CD8-positive, alpha-beta T cell (primary cell): ENCODE measurements at regions of chr12 and their contacts with region 1.

Region 1: DNA sequence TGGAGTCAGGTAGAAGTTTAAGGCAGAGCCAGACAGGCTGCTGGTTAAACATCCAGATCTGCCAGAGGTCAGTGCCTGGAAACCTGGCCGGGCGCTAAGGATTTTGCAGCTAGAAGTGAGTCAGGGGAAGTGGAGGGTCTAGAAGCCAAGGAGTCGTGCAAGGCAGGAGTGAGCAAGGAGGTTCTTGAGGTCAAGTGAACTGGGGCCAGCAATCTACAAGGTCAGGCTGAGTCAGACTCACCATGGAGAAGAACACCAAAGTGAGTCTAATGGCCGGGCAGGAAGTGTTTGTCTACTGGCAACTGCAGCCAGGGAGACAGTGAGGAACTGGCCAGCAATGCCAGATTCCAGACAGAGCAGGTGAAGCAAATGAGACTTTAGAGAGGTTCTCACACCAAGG is 628.2 kb downstream of the ETNK1 start:
- DNase-seq: no peak
- ATAC-seq: no peak
- H3K4me3 ChIP-seq: no peak overlapping the region
- H3K4me3 Mint-ChIP-seq: no peak overlapping the region
- H3K27ac ChIP-seq: no peak overlapping the region
- H3K27ac Mint-ChIP-seq: no peak overlapping the region
- H3K4me1 ChIP-seq: no peaks in the 10 kb centered on the region
- H3K4me1 Mint-ChIP-seq: no peaks in the 10 kb centered on the region
- H3K27me3 ChIP-seq: no peaks in the 10 kb centered on the region
- H3K27me3 Mint-ChIP-seq: no peaks in the 10 kb centered on the region
- CTCF ChIP-seq: no peak

Region 2: DNA sequence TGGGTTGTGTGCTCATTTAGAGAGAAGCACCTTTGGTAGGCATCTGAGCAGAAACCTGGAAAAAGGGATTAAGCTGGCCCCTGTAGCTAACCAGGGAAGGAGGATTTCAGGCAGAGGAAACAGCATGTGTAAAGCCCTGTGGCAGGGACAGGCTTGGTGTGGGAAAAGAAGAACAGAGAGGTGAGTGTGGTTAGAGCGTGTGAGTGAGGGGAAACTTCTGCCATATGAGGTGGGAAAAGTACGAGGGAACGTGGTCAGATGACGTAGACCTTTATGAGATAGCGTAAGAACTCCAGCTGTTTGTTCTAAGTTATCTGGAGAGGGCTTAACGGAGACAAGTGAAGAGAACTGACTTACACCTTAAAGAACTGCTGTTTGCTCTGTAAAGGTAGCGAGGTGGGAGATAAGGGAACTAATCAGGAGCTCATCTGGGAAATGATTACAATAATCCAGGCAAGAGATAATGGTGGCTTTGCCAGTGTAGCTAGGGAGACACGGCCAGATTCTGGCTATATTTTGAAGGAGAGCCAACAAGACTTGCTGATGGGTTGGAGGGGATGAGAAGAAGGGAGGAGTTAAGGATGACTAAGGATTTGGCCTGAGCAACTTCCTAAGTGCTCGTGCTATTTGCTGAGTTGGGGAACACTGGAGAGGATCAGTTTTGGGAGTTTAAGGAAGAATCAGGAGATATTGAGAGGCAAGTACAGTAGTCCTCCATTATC is 394.2 kb before region 1 on chr12:
- CTCF ChIA-PET with region 1: no interaction called
- POLR2A ChIA-PET with region 1: no interaction called
- intact Hi-C with region 1: no loop called
- DNase-seq: no peak
- ATAC-seq: no peak
- H3K4me3 ChIP-seq: no peak overlapping the region
- H3K4me3 Mint-ChIP-seq: no peak overlapping the region
- H3K27ac ChIP-seq: no peak overlapping the region
- H3K27ac Mint-ChIP-seq: no peak overlapping the region
- H3K4me1 ChIP-seq: no peaks in the 10 kb centered on the region
- H3K4me1 Mint-ChIP-seq: peaks cover 2% of the 10 kb centered on the region
- H3K27me3 ChIP-seq: no peaks in the 10 kb centered on the region
- H3K27me3 Mint-ChIP-seq: peaks cover 11% of the 10 kb centered on the region
- CTCF ChIP-seq: no peak

Region 3: DNA sequence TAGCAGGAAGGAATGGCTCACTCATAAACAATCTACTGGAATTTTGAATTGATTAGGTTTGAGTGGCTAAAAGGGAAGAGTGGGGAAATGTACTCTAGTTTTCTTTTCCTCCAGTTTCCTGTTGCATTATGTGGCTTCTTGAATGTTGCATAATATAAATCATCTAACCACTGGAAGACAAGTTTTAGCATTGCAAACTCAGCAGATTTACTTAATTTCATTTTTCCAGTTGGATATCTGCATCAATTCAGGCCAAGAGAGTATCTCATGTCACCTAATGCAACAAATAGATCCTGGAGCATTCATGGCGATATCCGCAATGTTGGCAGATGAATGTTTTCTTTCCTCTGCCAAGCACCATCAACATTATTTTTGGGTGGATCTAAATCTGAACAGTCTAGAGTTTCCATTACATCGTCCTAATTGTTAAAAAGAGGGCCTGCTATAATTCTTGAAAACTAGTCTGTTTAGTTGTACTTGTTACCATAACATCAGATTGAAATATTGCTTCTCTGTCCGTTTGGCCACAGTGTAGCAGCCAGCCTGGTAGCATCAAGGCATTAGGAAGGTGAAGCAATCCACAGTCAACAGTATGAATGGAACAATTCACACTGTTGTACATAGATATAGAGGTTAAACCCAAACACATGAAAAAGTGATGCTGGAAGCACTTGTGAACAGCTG is 84.0 kb before region 1 on chr12:
- CTCF ChIA-PET with region 1: no interaction called
- POLR2A ChIA-PET with region 1: no interaction called
- intact Hi-C with region 1: loop called in 1 of 2 experiments (anchors 5 kb)
- DNase-seq: no peak
- ATAC-seq: no peak
- H3K4me3 ChIP-seq: no peak overlapping the region
- H3K4me3 Mint-ChIP-seq: no peak overlapping the region
- H3K27ac ChIP-seq: no peak overlapping the region
- H3K27ac Mint-ChIP-seq: no peak overlapping the region
- H3K4me1 ChIP-seq: no peaks in the 10 kb centered on the region
- H3K4me1 Mint-ChIP-seq: no peaks in the 10 kb centered on the region
- H3K27me3 ChIP-seq: no peaks in the 10 kb centered on the region
- H3K27me3 Mint-ChIP-seq: peaks cover 2% of the 10 kb centered on the region
- CTCF ChIP-seq: no peak